ENCODE measurements at regions of chr15 and their contacts with region 1.

Region 1: GRCh38 chr15:64893481-64894394 is 18.0 kb upstream of the ANKDD1A start:
- DNase-seq: peak; percentile 99
- H3K4me3 Mint-ChIP-seq: peak overlapping the region; percentile 99
- H3K27ac Mint-ChIP-seq: peak overlapping the region; percentile 99
- H3K4me1 Mint-ChIP-seq: peaks cover 68% of the 10 kb centered on the region
- H3K27me3 Mint-ChIP-seq: no peaks in the 10 kb centered on the region

Region 2: GRCh38 chr15:63497642-63498467 is 1395.9 kb before region 1 on chr15:
- intact Hi-C with region 1: loop called (anchors 10 kb)
- DNase-seq: peak; percentile 88
- H3K4me3 Mint-ChIP-seq: no peak overlapping the region
- H3K27ac Mint-ChIP-seq: no peak overlapping the region
- H3K4me1 Mint-ChIP-seq: peaks cover 64% of the 10 kb centered on the region
- H3K27me3 Mint-ChIP-seq: no peaks in the 10 kb centered on the region

Region 3: GRCh38 chr15:64443747-64444621 is 449.8 kb before region 1 on chr15:
- intact Hi-C with region 1: loop called (anchors 5 kb)
- DNase-seq: peak; percentile 70
- H3K4me3 Mint-ChIP-seq: peak overlapping the region; percentile 76
- H3K27ac Mint-ChIP-seq: peak overlapping the region; percentile 94
- H3K4me1 Mint-ChIP-seq: peaks cover 40% of the 10 kb centered on the region
- H3K27me3 Mint-ChIP-seq: no peaks in the 10 kb centered on the region

Region 4: GRCh38 chr15:64651573-64652260 is 242.0 kb before region 1 on chr15:
- intact Hi-C with region 1: no loop called
- DNase-seq: peak; percentile 79
- H3K4me3 Mint-ChIP-seq: peak overlapping the region; percentile 46
- H3K27ac Mint-ChIP-seq: peak overlapping the region; percentile 70
- H3K4me1 Mint-ChIP-seq: peaks cover 25% of the 10 kb centered on the region
- H3K27me3 Mint-ChIP-seq: no peaks in the 10 kb centered on the region

Region 5: DNA sequence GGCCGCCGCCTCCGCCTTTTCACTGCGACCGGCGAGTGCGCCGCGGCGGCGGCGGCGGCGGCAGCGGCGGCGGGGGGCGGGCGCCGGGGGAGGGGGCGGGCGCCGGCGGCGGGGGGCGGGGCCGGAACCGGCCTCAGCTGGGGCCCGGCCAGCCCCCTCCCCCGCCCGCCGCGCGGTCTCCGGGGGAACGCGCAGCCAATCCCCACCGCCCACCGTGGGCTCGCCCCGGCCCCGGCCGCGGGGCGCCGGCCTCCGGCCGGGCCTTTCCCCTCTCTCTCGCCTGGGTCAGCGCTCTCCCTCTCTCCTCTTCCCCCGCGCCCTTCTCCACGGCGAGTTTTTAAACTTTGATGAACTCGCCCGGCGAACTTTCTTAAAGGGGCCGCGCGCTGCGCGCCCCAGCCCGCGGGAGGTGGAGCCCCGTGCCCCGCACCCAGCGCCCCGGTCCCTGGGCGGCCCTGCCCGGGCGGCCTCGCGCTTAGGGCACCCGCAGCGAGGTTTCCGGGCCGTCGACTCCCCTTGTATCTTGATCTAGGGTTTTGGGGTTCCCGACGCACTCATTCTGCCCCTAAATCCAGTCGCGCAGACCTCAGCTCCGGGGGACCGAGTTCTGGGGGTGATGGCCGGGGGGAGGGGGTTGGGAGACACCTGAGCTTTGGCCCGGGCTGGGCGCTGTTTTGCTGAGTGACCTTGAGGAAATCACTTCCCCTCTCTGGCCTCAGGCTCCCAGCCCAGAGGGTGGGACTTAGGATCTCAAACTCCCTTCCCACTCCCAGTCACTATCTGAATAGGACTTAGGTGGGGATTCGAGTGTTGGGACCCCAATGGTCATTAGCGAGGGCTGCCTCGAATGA is 118.0 kb before region 1 on chr15 and contains the start of gene RBPMS2:
- intact Hi-C with region 1: no loop called
- DNase-seq: peak; percentile 62
- H3K4me3 Mint-ChIP-seq: peak within 1 kb of the TSS; percentile 78
- H3K27ac Mint-ChIP-seq: no peak within 1 kb of the TSS
- H3K4me1 Mint-ChIP-seq: no peaks in the 10 kb centered on the region
- H3K27me3 Mint-ChIP-seq: peaks cover 72% of the 10 kb centered on the region
- total RNA-seq, gene RBPMS2: 0.12 TPM in 1 of 2 replicates, not detected in the other

Region 6: GRCh38 chr15:64836023-64836536 is 57.7 kb before region 1 on chr15:
- intact Hi-C with region 1: loop called (anchors 1 kb)
- DNase-seq: peak; percentile 64
- H3K4me3 Mint-ChIP-seq: peak overlapping the region; percentile 60
- H3K27ac Mint-ChIP-seq: peak overlapping the region; percentile 62
- H3K4me1 Mint-ChIP-seq: peaks cover 39% of the 10 kb centered on the region
- H3K27me3 Mint-ChIP-seq: no peaks in the 10 kb centered on the region

Region 7: GRCh38 chr15:64905119-64905831 is 11.5 kb after region 1 on chr15:
- intact Hi-C with region 1: loop called (anchors 1 kb)
- DNase-seq: peak; percentile 95
- H3K4me3 Mint-ChIP-seq: peak overlapping the region; percentile 80
- H3K27ac Mint-ChIP-seq: peak overlapping the region; percentile 74
- H3K4me1 Mint-ChIP-seq: peaks cover 32% of the 10 kb centered on the region
- H3K27me3 Mint-ChIP-seq: peaks cover 14% of the 10 kb centered on the region

Region 8: DNA sequence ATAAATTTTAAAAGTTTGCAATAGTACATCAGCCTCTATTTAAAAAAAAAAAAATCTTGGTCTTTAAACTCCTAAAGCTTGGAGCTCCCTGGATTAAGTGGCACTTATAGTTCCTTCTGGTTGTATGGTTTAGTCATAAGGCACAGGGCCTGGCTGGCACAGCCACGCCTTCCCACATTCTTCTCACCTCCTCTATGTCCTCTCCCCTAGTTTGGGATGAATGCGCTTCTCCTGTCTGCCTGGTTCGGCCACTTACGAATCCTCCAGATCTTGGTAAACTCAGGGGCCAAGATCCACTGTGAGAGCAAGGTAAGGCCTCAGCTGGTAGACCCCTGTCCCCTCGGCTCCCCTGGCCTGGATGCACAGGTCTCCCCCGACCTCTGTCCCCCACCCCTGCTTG is 28.0 kb after region 1 on chr15:
- intact Hi-C with region 1: no loop called
- DNase-seq: no peak
- H3K4me3 Mint-ChIP-seq: no peak overlapping the region
- H3K27ac Mint-ChIP-seq: no peak overlapping the region
- H3K4me1 Mint-ChIP-seq: peaks cover 2% of the 10 kb centered on the region
- H3K27me3 Mint-ChIP-seq: peaks cover 2% of the 10 kb centered on the region

Region 9: DNA sequence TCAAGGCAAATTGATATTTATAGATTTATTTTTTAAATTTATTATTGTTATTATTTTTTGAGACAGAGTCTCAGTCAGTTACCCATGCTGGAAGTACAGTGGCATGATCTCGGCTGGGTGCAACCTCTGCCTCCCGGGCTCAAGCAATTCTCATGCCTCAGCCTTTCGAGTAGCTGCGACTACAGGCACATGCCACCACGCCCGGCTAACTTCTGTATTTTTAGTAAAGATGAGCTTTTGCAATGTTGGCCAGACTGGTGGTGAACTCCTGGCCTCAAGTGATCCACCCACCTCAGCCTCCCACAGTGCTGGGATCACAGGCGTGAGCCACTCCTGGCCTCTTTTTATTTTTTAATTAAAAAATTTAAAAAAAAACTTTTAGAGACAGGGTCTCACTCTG is 77.0 kb after region 1 on chr15:
- intact Hi-C with region 1: no loop called
- DNase-seq: peak; percentile 37
- H3K4me3 Mint-ChIP-seq: no peak overlapping the region
- H3K27ac Mint-ChIP-seq: no peak overlapping the region
- H3K4me1 Mint-ChIP-seq: peaks cover 3% of the 10 kb centered on the region
- H3K27me3 Mint-ChIP-seq: no peaks in the 10 kb centered on the region

Region 10: DNA sequence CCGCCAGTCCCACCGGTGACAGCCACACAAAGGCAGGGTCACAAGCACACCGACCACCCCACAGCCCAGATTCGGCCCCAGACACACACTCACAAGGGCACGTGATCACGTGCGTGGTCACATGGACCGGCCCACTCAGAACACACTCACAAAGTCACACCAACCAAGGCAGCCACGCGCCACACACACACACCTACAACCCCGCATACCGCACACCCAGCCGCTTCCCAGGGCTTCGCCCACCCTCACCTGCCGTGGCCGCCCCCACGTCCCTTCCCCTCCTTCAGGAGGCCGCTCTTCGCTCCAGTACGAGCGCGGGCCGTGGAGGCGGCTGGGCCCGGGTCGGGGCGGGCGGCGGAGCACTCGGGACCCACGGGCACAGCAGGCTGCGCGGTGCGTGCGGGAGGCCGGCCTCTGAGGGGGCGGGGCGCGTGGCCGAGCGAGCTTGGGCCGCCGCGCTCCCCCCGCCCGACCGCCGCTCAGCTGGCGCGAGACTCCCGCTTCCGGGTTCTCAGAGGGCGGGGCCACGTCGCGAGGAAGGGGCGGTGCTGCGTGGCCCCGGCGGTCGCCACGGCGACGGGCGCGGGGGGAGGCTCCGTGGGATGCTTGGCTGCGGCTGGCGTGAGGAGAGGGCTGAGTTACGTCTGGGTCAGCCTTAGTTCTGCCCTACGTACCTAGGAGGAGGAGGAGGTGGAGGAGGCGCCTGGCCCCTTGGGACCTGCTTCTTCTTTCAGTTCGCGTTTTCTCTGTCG is 95.9 kb after region 1 on chr15 and contains the start of gene SPG21:
- intact Hi-C with region 1: loop called (anchors 5 kb)
- DNase-seq: peak; percentile 98
- H3K4me3 Mint-ChIP-seq: peak within 1 kb of the TSS; percentile 94
- H3K27ac Mint-ChIP-seq: peak within 1 kb of the TSS; percentile 89
- H3K4me1 Mint-ChIP-seq: peaks cover 42% of the 10 kb centered on the region
- H3K27me3 Mint-ChIP-seq: no peaks in the 10 kb centered on the region
- total RNA-seq, gene SPG21: 70.4 and 76.2 TPM in 2 replicates